ENCODE measurements at regions of chr15 and their contacts with region 1.

Region 1: GRCh38 chr15:77186594-77187011 is 115.7 kb upstream of the TSPAN3 start:
- DNase-seq: no peak
- ATAC-seq: peak in 7 of 8 donors; percentile 33 to 64 (median 43)
- H3K4me3 ChIP-seq: no peak overlapping the region
- H3K27ac ChIP-seq: peak overlapping the region; percentile 38 to 93 (median 80)
- H3K4me1 ChIP-seq: peaks cover 5 to 70% (median 55%) of the 10 kb centered on the region in 9 donors
- H3K27me3 ChIP-seq: no peaks in the 10 kb centered on the region
- CTCF ChIP-seq: peak; percentile 38 to 81 (median 63)

Region 2: GRCh38 chr15:77118882-77119321 is 67.7 kb before region 1 on chr15:
- intact Hi-C with region 1: loop called in 4 of 10 experiments (anchors 5 to 10 kb)
- DNase-seq: peak in 1 of 2 donors; percentile 60
- ATAC-seq: peak in 6 of 8 donors; percentile 71 to 82 (median 79)
- H3K4me3 ChIP-seq: no peak overlapping the region
- H3K27ac ChIP-seq: peak overlapping the region in 2 of 10 donors; percentile 3 to 38
- H3K4me1 ChIP-seq: peaks cover 0 to 40% (median 16%) of the 10 kb centered on the region in 9 donors
- H3K27me3 ChIP-seq: no peaks in the 10 kb centered on the region
- CTCF ChIP-seq: peak; percentile 59 to 89 (median 75)

Region 3: DNA sequence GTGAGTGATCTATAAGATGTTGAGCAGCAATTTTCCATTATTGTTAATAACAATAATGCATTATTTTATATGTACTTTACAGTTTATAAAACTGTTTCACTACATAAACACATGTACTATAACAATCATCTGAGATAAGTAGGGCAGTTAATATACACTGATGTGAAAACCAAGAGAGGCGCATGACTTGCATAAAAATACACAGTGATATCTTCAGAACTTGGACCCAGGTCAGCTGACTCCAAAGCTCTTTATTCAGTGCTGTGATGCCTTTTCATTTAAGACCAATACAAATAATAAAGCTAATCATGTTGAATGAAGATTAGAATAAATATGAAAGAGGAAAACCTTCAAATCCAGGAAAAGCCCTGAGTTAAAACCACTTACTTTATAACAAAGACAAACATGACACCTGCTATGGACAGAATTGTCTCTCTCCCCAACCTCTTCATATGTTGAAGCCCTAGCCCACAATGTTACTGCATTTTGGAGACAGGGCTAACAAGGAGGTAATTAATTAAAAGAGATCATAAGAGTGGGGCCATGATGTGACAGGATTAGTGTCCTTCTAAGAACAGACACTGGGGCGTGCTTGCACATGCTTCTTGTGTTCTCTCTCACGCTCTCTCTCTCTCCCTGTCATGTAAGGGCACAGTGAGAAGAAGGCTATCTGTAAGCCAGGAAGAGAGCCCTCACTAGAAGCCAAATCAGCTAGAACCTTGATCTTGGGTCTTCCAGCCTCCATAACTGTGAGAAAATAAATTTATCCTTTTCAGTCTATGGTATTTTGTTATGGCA is 59.9 kb before region 1 on chr15:
- intact Hi-C with region 1: loop called in 2 of 10 experiments (anchors 5 to 10 kb)
- DNase-seq: no peak
- ATAC-seq: peak; percentile 42 to 84 (median 73)
- H3K4me3 ChIP-seq: no peak overlapping the region
- H3K27ac ChIP-seq: peak overlapping the region in 5 of 10 donors; percentile 11 to 58 (median 43)
- H3K4me1 ChIP-seq: peaks cover 0 to 46% (median 26%) of the 10 kb centered on the region in 9 donors
- H3K27me3 ChIP-seq: no peaks in the 10 kb centered on the region
- CTCF ChIP-seq: no peak

Region 4: GRCh38 chr15:77266708-77267386 is 80.2 kb after region 1 on chr15:
- intact Hi-C with region 1: no loop called
- DNase-seq: no peak
- ATAC-seq: peak in 1 of 8 donors; percentile 24
- H3K4me3 ChIP-seq: no peak overlapping the region
- H3K27ac ChIP-seq: no peak overlapping the region
- H3K4me1 ChIP-seq: no peaks in the 10 kb centered on the region
- H3K27me3 ChIP-seq: no peaks in the 10 kb centered on the region
- CTCF ChIP-seq: no peak